WTC11 (cell line): ENCODE measurements at regions of chr3 and their contacts with region 1.

Region 1: GRCh38 chr3:135229018-135229495 is 434.0 kb downstream of the EPHB1 start:
- DNase-seq: peak; percentile 43
- ATAC-seq: peak; percentile 85
- H3K4me3 Mint-ChIP-seq: no peak overlapping the region
- H3K27ac Mint-ChIP-seq: no peak overlapping the region
- H3K4me1 Mint-ChIP-seq: peaks cover 42% of the 10 kb centered on the region
- H3K27me3 Mint-ChIP-seq: peaks cover 6% of the 10 kb centered on the region
- CTCF ChIP-seq: no peak

Region 2: DNA sequence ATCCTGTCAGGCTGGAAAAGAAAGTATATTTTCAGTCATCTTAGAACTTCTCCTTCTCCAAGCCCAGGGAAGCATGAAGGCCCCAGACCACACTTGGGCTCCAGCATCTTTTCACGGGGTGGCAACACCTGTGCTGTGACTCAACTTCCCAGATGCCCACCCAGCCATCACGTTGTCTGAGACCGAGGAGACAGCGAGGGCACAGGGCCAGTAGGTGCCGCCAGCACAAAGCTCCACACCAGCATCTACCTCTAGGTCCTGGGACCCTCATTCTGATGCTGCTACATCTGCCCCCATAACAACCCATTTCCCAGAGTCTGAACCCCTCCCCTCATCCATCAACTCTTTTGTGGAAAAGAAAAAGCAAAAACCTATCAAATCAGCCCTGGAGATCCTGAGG is 13.1 kb before region 1 on chr3:
- CTCF ChIA-PET with region 1: interaction called, 4 read pairs
- POLR2A ChIA-PET with region 1: interaction called, 10 read pairs
- DNase-seq: no peak
- ATAC-seq: no peak
- H3K4me3 Mint-ChIP-seq: no peak overlapping the region
- H3K27ac Mint-ChIP-seq: no peak overlapping the region
- H3K4me1 Mint-ChIP-seq: peaks cover 66% of the 10 kb centered on the region
- H3K27me3 Mint-ChIP-seq: no peaks in the 10 kb centered on the region
- CTCF ChIP-seq: no peak

Region 3: DNA sequence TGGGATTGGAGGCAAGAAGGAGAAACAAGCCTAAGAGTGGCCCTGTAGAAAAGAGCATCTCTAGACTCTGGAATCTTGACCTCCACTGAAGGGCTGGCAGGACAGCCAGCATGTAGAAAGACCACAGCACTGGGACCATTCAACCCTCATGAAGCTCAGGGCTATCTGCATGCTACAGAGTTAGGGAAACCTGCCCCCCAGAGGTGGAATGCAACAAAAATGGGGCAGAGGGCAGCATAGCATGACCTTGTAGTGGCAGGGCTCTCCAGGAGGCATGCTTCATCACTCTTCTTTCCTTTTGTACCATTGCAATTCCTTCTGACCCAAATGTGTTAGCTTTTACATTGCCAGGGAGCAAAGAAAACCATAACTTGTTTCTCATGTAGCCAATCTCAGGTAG is 11.4 kb after region 1 on chr3:
- CTCF ChIA-PET with region 1: interaction called, 18 read pairs
- POLR2A ChIA-PET with region 1: no interaction called
- DNase-seq: peak; percentile 60
- ATAC-seq: peak; percentile 85
- H3K4me3 Mint-ChIP-seq: no peak overlapping the region
- H3K27ac Mint-ChIP-seq: no peak overlapping the region
- H3K4me1 Mint-ChIP-seq: peaks cover 29% of the 10 kb centered on the region
- H3K27me3 Mint-ChIP-seq: no peaks in the 10 kb centered on the region
- CTCF ChIP-seq: 0 out of 2 replicates have a peak, but pooled peaks have one; percentile 22